ENCODE measurements at regions of chr5 and their contacts with region 1.

Region 1: DNA sequence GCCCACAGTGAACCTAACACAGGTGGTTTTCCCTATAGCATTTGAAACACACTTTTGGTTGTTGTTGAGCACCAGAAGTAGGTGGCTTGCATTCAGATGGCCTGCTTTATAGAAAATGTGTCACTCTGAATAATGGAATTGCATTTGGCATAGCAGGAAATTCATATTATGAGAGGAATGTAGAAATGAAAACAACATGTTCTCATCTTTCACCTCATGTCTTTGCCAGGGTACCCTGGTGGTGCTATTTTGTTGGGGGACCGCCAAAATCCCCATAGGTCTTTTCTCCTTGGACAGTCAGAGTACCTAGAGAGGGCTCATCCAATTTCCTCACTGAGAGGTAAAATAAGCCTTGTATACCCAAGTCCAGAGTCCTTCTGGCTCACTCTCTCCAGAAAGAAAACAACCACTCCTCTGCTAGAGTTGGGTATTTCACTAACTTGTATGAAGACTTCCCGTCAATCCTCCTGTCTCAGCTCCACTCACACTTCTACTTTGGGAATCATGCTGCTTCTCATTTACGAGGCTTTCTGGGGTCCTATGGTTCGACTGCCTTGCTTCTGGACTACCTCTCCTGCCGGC is 67.4 kb downstream of the MRPS27 start:
- DNase-seq: no peak
- CTCF ChIP-seq: no peak

Region 2: DNA sequence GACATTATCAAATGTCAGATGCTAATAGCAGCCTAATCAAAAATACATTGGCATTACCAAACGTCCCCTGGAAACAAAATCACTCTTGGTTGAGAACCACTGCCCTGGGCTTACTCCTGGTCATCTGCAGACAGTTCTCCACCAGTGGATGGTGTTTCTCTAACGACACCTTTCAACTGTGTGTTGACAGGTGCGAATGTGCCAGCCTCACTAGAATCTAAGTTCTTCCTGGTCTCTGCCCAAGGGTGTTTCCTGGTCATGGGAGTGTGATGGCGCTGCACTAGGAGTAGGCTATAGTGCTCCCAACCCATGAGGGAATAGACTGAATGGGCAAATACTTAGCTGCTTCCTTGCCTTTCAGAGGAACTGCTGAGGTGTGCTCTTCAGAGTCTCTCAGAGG is 38.5 kb before region 1 on chr5:
- CTCF ChIA-PET with region 1: no interaction called
- POLR2A ChIA-PET with region 1: no interaction called
- DNase-seq: no peak
- CTCF ChIP-seq: no peak

Region 3: DNA sequence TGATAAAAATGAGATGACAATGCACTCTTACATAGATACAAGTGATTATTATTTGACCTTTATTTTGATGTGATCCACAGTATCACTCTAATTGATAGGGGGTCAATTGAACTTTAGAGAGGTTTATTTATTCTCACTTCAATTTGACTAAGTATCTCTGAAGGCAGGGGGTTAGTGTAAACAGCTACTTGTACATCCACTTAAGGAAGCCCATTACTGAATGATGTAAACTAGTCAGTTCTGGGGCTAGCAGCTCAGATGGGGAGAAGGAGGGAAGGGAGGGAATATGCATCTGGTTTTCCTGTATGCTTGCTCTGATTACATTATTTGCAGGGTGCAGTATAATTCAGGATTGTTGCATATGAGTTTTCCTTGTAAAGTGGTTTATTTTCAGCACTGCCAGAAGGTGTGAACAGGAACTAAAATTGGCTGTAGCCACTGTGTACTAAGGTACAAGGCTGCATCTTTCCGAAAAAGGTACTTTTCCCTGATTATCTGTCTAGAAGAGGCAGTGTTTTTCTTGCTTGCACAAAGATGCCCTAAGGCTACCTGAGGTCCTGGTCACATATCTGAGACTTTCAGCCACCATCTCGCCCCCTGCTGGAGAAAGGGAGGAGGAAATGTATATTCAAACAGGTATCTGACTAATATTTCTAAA is 16.2 kb after region 1 on chr5:
- CTCF ChIA-PET with region 1: interaction called, 10 read pairs
- POLR2A ChIA-PET with region 1: no interaction called
- DNase-seq: peak; percentile 38
- CTCF ChIP-seq: peak; percentile 57

Measured in GM10248 (cell line).